ENCODE measurements at regions of chr20 and their contacts with region 1.

Region 1: GRCh38 chr20:63009045-63009961 is 2.5 kb upstream of the BHLHE23 start:
- DNase-seq: no peak
- H3K4me3 ChIP-seq: peak overlapping the region in 2 of 4 donors; percentile 9 to 11
- H3K27ac ChIP-seq: no peak overlapping the region
- H3K4me1 ChIP-seq: peaks cover 8 to 55% (median 23%) of the 10 kb centered on the region in 3 donors
- H3K27me3 ChIP-seq: peaks cover 50 to 100% (median 58%) of the 10 kb centered on the region in 4 donors
- CTCF ChIP-seq: peak; percentile 92 to 96 (median 93)
- POLR2A ChIP-seq: no peak

Region 2: GRCh38 chr20:62804612-62805154 is 204.6 kb before region 1 on chr20 and contains the start of gene OGFR:
- intact Hi-C with region 1: no loop called
- DNase-seq: no peak
- H3K4me3 ChIP-seq: peak within 1 kb of the TSS; percentile 71 to 100 (median 100)
- H3K27ac ChIP-seq: peak within 1 kb of the TSS; percentile 77 to 94 (median 90)
- H3K4me1 ChIP-seq: peaks cover 29 to 47% (median 31%) of the 10 kb centered on the region in 3 donors
- H3K27me3 ChIP-seq: no peaks in the 10 kb centered on the region
- CTCF ChIP-seq: no peak
- POLR2A ChIP-seq: peak in 2 of 4 donors; percentile 39 to 67
- total RNA-seq, gene OGFR: 19.1 to 41.4 (median 27.3) TPM

Region 3: DNA sequence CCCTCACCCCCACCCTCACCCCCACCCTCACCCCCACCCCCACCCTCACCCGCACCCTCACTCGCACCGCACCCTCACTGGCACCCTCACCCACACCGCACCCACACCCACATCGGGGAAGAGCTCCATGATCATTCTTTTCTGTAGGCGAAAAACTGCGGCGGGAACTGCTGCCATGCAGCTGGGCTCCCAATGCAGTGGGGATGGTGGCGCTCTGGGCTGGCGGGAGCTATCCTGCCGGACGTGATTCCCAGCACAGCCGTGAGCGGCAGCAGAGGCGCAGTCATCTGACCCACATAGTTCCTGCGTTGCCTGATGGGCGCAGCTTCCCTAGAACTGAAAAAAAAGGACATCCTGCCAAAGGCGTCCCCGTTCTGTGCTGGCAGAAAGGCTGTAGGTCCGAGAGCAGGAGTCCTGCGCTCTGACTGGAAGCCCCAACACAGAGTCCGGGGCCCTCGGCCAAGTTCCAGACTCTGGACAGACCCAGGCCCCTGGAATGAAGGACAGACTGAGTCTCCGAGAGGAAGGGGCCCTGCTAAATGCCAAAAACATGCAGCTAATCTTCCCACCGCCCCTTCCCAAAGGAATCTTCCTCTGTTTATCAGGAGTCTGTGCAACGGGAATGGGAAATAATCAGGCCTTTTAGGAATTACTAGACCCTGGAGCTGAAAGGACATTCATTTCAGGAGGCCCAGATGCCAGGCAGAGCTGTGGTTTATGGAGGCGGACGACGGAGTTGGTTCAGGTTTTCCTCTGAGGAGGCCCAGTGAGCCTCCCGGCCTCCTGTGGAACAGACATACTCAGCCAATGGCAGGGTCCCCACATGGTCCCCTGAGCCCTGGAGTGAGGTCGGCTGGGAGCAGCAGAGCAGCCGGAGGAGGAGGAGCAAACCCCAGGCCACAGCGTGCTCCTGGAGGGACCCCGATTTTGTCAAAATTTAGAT is 133.6 kb before region 1 on chr20:
- intact Hi-C with region 1: loop called (anchors 10 kb)
- DNase-seq: no peak
- H3K4me3 ChIP-seq: peak overlapping the region in 1 of 4 donors; percentile 44
- H3K27ac ChIP-seq: peak overlapping the region; percentile 39 to 80 (median 74)
- H3K4me1 ChIP-seq: peaks cover 10 to 37% (median 25%) of the 10 kb centered on the region in 3 donors
- H3K27me3 ChIP-seq: no peaks in the 10 kb centered on the region
- CTCF ChIP-seq: peak in 4 of 6 experiments; percentile 33 to 42 (median 40)
- POLR2A ChIP-seq: no peak

Region 4: GRCh38 chr20:62899690-62900051 is 109.6 kb before region 1 on chr20:
- intact Hi-C with region 1: loop called (anchors 10 kb)
- DNase-seq: no peak
- H3K4me3 ChIP-seq: no peak overlapping the region
- H3K27ac ChIP-seq: peak overlapping the region in 1 of 4 donors; percentile 82
- H3K4me1 ChIP-seq: peaks cover 0 to 45% (median 22%) of the 10 kb centered on the region in 3 donors
- H3K27me3 ChIP-seq: no peaks in the 10 kb centered on the region
- CTCF ChIP-seq: peak in 1 of 6 experiments; percentile 12
- POLR2A ChIP-seq: no peak